Heart right ventricle (tissue), 16 donors: ENCODE measurements at regions of chr7 and their contacts with region 1.

Region 1: DNA sequence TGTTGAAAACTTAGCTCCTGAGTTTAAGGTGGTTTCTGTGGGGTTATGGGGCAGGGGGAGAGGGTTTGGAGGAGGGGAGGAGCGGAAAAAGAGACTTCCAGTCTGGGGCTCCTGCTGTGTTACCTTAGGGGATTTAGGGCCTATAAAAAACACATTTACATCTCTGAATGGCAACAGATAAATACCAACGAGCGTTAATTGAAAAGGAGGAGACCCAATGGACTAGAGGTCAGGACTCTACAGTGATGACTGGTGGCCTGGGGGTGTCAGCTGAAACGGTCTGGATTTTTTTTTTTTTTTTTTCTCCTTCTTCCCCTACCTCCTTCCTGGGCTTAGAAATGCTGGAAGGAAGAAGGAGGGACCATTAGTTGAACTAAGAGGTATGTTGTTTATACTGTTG is 47.4 kb downstream of the AUTS2 start:
- DNase-seq: no peak
- ATAC-seq: no peak
- H3K4me3 ChIP-seq: no peak overlapping the region
- H3K27ac ChIP-seq: no peak overlapping the region
- H3K4me1 ChIP-seq: peaks cover 0 to 22% (median 11%) of the 10 kb centered on the region in 9 donors
- H3K27me3 ChIP-seq: no peaks in the 10 kb centered on the region
- CTCF ChIP-seq: no peak

Region 2: DNA sequence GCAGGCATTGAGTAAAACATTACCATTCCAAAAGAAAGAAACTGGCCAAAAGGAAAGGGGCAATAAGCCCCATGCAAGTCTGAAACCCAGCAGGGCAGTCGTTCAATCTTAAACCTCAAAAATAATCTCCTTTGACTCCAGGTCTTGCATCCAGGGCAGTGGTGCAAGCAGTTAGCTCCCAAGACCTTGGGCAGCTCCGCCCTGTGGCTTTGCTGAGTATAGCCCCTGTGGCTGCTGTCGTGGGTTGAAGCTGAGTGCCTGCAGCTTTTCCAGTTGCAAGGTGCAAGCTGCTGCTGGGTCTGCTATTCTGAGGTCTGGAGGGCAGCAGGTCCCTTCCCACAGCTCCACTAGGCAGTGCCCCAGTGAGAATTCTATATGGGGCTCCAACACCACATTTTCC is 627.5 kb before region 1 on chr7:
- intact Hi-C with region 1: no loop called
- DNase-seq: no peak
- ATAC-seq: no peak
- H3K4me3 ChIP-seq: no peak overlapping the region
- H3K27ac ChIP-seq: no peak overlapping the region
- H3K4me1 ChIP-seq: no peaks in the 10 kb centered on the region
- H3K27me3 ChIP-seq: no peaks in the 10 kb centered on the region
- CTCF ChIP-seq: no peak

Region 3: GRCh38 chr7:69598081-69598486 is 47.6 kb before region 1 on chr7 and contains the start of gene AUTS2:
- intact Hi-C with region 1: no loop called
- DNase-seq: peak; percentile 88 to 90
- ATAC-seq: peak; percentile 82 to 93 (median 90)
- H3K4me3 ChIP-seq: peak within 1 kb of the TSS; percentile 76 to 98 (median 83)
- H3K27ac ChIP-seq: peak within 1 kb of the TSS; percentile 68 to 92 (median 88)
- H3K4me1 ChIP-seq: peaks cover 0 to 24% (median 11%) of the 10 kb centered on the region in 9 donors
- H3K27me3 ChIP-seq: peaks cover 0 to 21% (median 0%) of the 10 kb centered on the region in 7 donors
- CTCF ChIP-seq: no peak
- total RNA-seq, gene AUTS2: 5.0 to 11.2 (median 7.9) TPM

Region 4: DNA sequence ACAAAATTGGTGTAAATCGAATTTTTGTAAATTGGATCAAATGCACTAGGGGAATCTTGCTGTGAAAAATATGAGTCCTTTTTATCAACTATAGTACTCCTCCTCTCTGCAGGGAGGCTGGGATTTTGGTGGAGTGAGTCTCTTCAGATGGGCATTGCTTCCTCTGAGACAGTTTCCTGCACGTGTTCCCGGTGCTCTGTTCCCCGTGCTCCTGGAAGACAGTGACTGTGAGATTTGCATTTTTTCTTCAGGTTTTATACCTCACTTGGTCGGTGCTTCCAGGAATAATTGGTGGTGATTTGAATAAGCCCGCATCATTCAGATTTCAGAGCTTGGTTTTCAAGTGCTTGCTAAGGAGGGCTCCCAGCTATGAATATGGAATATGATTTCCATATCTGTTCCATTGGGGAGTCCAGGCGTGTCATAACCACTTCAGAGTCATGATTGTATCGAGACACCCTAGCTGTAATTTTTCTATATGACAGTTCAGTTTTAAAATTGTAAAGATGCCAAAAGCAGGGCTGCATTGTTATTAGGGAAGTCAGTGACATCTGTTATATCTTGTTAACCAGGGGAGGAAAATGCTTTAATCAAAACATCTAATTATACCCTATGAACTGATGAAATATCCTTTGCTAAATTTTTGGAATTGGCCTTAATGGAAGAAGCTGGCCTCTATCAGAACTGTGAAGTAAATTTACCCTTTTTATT is 35.2 kb before region 1 on chr7:
- intact Hi-C with region 1: loop called in 1 of 10 experiments (anchors 5 kb)
- DNase-seq: no peak
- ATAC-seq: peak in 2 of 8 donors; percentile 11 to 17
- H3K4me3 ChIP-seq: no peak overlapping the region
- H3K27ac ChIP-seq: peak overlapping the region in 1 of 10 donors; percentile 0
- H3K4me1 ChIP-seq: peaks cover 0 to 19% (median 1%) of the 10 kb centered on the region in 9 donors
- H3K27me3 ChIP-seq: no peaks in the 10 kb centered on the region
- CTCF ChIP-seq: no peak

Region 5: DNA sequence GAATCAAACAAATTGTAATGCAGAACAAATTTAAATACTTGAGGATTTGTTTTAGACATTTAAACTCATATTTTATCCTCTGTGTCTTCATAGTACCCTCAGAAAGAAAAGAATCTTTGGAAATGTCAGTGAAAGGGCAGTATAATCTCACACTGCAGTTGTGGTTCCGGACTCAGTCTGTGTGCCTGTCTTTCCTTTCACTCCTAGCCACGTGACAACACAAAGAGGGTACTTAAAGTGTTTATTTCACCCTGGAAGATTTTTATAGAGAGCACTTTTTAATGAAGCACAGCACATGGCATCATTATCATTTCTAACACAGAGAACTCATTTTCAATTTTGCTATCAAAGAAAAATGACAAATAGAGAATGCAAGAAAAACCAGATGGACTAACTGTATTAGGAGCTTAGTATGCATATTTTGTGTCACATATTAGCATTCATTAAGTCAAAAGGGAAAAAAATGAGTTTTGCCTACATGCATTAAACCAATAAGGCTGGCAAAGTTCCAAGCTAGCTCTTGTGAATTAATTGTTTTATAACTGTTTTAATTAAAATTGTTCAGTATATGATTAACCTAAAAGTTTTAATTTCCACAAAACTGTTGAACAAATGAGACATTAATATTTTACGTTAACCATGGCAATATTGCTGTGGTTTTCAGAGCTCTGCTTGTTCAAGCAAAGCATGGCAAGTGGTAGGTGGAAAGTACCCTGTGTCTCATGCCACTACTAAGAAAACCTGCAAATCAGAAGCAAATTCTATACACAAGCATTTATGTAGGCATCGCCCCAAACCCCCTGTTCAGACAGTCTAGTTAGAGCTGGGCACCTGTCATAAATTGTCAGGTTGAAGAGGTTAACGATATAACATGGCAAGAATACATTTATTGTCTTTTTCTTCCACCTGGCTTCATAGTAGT is 18.5 kb after region 1 on chr7:
- intact Hi-C with region 1: no loop called
- DNase-seq: no peak
- ATAC-seq: no peak
- H3K4me3 ChIP-seq: no peak overlapping the region
- H3K27ac ChIP-seq: no peak overlapping the region
- H3K4me1 ChIP-seq: peaks cover 0 to 5% (median 0%) of the 10 kb centered on the region in 9 donors
- H3K27me3 ChIP-seq: no peaks in the 10 kb centered on the region
- CTCF ChIP-seq: no peak